ENCODE measurements at regions of chr1 and their contacts with region 1.

Region 1: GRCh38 chr1:111720274-111720976 is 18.8 kb downstream of the INKA2 start:
- DNase-seq: no peak
- ATAC-seq: no peak
- H3K4me3 ChIP-seq: no peak overlapping the region
- H3K4me3 Mint-ChIP-seq: no peak overlapping the region
- H3K27ac ChIP-seq: no peak overlapping the region
- H3K27ac Mint-ChIP-seq: peak overlapping the region in 1 of 2 donors; percentile 20
- H3K4me1 ChIP-seq: peaks cover 0 to 11% of the 10 kb centered on the region in 2 experiments
- H3K4me1 Mint-ChIP-seq: peaks cover 16 to 41% (median 22%) of the 10 kb centered on the region in 3 donors
- H3K27me3 ChIP-seq: no peaks in the 10 kb centered on the region
- H3K27me3 Mint-ChIP-seq: no peaks in the 10 kb centered on the region

Region 2: GRCh38 chr1:111755331-111756123 is 35.1 kb after region 1 on chr1 and contains the start of gene DDX20:
- CTCF ChIA-PET with region 1: interaction called, 15 to 30 read pairs
- POLR2A ChIA-PET with region 1: interaction called, 3 read pairs
- DNase-seq: peak; percentile 85 to 97 (median 92)
- ATAC-seq: peak; percentile 90 to 96 (median 92)
- H3K4me3 ChIP-seq: peak within 1 kb of the TSS; percentile 82 to 91
- H3K4me3 Mint-ChIP-seq: peak within 1 kb of the TSS; percentile 91 to 97 (median 95)
- H3K27ac ChIP-seq: peak within 1 kb of the TSS; percentile 89
- H3K27ac Mint-ChIP-seq: peak within 1 kb of the TSS; percentile 98 to 99
- H3K4me1 ChIP-seq: peaks cover 13 to 18% of the 10 kb centered on the region in 2 experiments
- H3K4me1 Mint-ChIP-seq: peaks cover 43 to 55% (median 51%) of the 10 kb centered on the region in 3 donors
- H3K27me3 ChIP-seq: no peaks in the 10 kb centered on the region
- H3K27me3 Mint-ChIP-seq: no peaks in the 10 kb centered on the region
- total RNA-seq, gene DDX20: 16.7 to 19.8 (median 17.5) TPM

Region 3: DNA sequence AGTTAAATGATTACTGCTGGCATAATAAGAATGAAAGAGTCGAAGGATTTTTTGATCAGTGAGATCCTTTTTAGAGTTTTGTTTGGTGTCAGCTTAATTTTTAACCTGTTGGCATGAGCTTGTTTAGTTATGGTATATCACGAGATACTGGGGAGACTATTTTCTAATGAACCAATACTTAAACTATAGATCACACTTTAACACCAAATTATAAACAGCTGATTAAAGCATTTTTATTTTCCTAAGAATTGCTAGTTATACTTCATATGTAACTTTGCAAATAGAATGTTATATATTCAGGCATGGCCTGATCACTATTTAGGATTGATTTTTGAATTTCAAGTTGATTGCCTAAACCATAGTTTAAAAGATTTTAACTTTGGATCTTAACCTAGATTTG is 41.3 kb after region 1 on chr1:
- CTCF ChIA-PET with region 1: interaction called, 33 to 86 read pairs
- POLR2A ChIA-PET with region 1: interaction called in 1 of 2 experiments, 3 read pairs
- DNase-seq: no peak
- ATAC-seq: no peak
- H3K4me3 ChIP-seq: no peak overlapping the region
- H3K4me3 Mint-ChIP-seq: no peak overlapping the region
- H3K27ac ChIP-seq: no peak overlapping the region
- H3K27ac Mint-ChIP-seq: no peak overlapping the region
- H3K4me1 ChIP-seq: peaks cover 3 to 6% of the 10 kb centered on the region in 2 experiments
- H3K4me1 Mint-ChIP-seq: peaks cover 25 to 34% (median 28%) of the 10 kb centered on the region in 3 donors
- H3K27me3 ChIP-seq: no peaks in the 10 kb centered on the region
- H3K27me3 Mint-ChIP-seq: no peaks in the 10 kb centered on the region

Region 4: DNA sequence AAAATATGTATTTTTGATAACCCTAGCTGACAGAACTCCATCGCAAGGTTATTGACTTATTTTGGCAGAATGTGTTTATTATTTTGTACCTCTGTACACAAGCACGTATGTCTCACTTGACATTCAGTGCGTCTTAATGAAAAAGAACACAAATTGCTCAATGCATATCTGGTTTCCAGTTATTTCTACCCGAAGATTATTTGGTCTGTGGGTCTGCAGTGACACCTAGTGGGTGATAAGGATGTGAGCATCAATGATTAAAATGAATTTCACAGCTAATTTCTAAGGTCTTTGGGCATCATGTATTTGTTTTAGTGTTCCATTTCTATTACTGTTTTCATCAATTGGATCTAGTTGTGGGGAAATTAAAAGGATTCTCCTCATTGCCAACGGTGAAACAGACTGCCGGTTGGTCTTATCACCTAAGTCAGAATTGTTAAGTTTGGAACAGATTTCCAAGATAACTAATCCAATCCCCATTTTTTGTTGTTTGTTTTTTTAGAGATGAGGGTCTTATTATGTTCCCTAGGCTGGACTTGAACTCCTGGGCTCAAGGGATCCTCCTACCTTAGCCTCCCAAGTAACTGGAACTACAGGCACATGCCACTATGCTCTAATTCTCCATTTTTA is 49.2 kb after region 1 on chr1:
- CTCF ChIA-PET with region 1: interaction called, 33 to 86 read pairs
- POLR2A ChIA-PET with region 1: no interaction called
- DNase-seq: peak in 31 of 35 experiments; percentile 9 to 84 (median 45)
- ATAC-seq: peak; percentile 32 to 69 (median 50)
- H3K4me3 ChIP-seq: no peak overlapping the region
- H3K4me3 Mint-ChIP-seq: no peak overlapping the region
- H3K27ac ChIP-seq: no peak overlapping the region
- H3K27ac Mint-ChIP-seq: peak overlapping the region in 1 of 2 donors; percentile 16
- H3K4me1 ChIP-seq: no peaks in the 10 kb centered on the region
- H3K4me1 Mint-ChIP-seq: peaks cover 0 to 8% (median 2%) of the 10 kb centered on the region in 3 donors
- H3K27me3 ChIP-seq: no peaks in the 10 kb centered on the region
- H3K27me3 Mint-ChIP-seq: no peaks in the 10 kb centered on the region

Measured in T-cell (primary cell).